Activated naive CD4-positive, alpha-beta T cell treated with anti-CD3 and anti-CD28 coated beads for 36 hours (primary cell): ENCODE measurements at regions of chr1 and their contacts with region 1.

Region 1: DNA sequence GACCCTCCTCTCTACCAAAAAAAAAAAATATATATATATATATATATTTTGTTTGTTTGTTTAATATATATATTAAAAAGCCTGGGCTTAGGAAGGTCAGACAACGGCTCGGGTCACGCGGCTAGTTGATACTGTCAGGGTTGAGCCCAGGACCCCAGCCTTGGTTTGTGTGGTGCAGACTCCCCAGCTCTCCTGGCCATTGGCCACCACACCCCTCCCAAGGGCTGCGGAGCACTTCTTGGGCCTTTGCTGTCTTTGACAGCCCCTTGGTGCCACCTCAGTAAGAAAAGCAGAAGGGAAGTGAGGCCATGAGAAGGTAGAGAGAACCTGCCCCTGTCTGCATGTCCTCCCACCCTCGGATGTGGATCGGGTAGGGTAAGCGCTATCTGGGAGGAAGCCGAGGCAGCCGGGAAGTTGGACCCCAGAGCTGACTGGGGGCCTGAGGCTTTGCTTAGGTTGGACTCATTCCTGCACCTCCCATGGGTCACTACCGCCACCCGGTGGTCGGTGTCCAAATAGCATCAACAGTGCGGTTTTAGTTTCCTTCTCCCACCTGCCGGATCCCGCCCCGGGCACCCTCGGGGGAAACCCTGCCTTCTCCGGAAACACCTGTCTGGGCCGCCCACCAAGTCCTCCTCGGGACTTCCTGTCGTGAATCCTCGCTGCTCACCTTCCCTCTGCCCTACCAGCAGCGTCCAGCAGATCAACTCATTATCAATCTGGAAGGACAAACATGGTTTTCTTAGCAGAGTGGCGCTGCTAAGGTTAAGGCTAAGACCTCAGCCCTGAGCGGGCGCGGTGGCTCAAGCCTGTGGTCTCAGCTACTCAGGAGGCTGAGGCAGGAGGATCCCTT is 29.8 kb upstream of the GNPAT start:
- DNase-seq: peak; percentile 98
- H3K4me3 Mint-ChIP-seq: peak overlapping the region; percentile 77
- H3K27ac Mint-ChIP-seq: no peak overlapping the region
- H3K4me1 Mint-ChIP-seq: peaks cover 7% of the 10 kb centered on the region
- H3K27me3 Mint-ChIP-seq: no peaks in the 10 kb centered on the region

Region 2: GRCh38 chr1:230797942-230798418 is 413.3 kb before region 1 on chr1:
- CTCF ChIA-PET with region 1: interaction called, 4 read pairs
- intact Hi-C with region 1: loop called (anchors 1 kb)
- DNase-seq: peak; percentile 23
- H3K4me3 Mint-ChIP-seq: no peak overlapping the region
- H3K27ac Mint-ChIP-seq: no peak overlapping the region
- H3K4me1 Mint-ChIP-seq: no peaks in the 10 kb centered on the region
- H3K27me3 Mint-ChIP-seq: peaks cover 12% of the 10 kb centered on the region

Region 3: DNA sequence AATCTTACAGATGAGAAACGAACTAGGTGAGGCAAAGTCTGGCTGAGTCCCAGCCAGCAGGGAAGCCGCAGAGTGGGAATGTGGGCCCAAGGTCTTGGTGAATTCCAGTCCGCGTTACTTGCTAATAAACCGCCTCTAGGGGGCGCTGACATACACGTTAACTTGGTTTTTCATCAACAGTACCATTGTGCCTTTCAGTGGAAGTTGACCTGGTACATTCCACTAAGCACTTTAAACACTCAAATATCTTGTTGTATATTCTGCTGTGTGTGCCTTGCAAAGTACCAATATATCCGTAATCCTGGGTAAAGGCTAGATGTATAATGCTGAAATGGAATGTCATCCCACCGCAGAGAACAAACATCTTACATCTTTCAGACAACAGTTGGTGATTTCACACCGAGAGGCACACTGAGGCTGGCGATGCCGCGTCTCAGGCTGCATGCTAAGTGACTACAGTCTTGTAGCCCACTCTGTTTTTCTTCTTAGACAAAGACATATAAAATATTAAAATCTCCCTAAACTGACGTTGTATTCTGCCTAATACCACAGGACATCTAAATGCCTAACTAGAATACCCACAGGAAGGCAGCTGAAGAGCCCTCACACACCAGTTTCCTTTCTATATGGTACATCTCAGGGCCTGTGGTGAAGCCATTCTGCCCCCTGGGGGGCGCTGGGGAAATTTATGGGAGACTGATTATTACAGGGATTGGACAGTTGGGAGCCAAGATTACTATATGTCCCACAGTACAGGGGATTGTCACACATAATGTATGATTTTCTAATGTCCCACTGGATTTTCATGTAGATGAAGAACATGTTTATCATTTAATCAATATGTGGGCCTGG is 293.7 kb before region 1 on chr1:
- CTCF ChIA-PET with region 1: interaction called, 3 read pairs
- intact Hi-C with region 1: loop called (anchors 1 kb)
- DNase-seq: peak; percentile 86
- H3K4me3 Mint-ChIP-seq: no peak overlapping the region
- H3K27ac Mint-ChIP-seq: no peak overlapping the region
- H3K4me1 Mint-ChIP-seq: peaks cover 5% of the 10 kb centered on the region
- H3K27me3 Mint-ChIP-seq: no peaks in the 10 kb centered on the region

Region 4: DNA sequence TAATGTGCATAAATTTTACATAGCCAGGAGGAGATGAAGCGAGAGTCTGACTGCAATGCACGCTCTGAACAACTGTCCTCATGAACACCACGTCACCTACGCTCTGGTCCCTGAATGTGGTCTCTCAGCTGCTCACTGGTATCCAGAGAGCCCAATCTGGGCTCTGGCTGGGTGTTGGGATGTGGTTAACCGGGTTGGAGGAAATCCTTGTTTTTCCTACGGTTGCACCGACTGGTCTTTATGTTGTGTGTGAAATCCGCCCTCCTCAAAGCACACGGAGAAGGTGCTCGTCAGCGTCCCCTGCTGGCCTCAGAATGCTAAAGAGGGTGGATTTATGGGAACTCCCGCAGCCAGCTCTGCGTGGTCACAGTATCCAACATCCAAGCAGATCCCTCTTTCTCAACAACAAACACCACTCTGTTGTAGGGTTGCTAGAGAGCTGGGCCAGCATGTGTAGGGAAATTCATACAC is 119.4 kb before region 1 on chr1:
- CTCF ChIA-PET with region 1: interaction called, 6 read pairs
- intact Hi-C with region 1: loop called (anchors 5 kb)
- DNase-seq: peak; percentile 56
- H3K4me3 Mint-ChIP-seq: no peak overlapping the region
- H3K27ac Mint-ChIP-seq: no peak overlapping the region
- H3K4me1 Mint-ChIP-seq: no peaks in the 10 kb centered on the region
- H3K27me3 Mint-ChIP-seq: peaks cover 18% of the 10 kb centered on the region

Region 5: DNA sequence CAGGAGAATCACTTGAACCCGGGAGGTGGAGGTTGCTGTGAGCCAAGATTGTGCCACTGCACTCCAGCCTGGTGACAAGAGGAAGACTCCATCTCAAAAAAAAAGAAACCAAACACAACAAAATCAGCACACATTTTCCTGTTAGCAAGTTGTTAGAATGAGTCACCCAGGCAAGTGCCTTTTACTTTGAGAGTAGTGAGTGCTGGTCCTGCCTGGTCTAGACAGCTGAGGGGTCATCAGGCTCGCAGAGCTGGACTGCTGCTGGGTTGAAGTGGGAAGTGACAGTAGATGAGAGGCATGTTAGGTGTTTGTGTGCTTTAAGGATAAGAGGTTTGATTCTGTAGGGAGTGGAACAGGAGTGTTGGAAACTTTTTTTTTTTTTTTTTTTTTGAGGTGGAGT is 61.6 kb after region 1 on chr1:
- CTCF ChIA-PET with region 1: no interaction called
- intact Hi-C with region 1: no loop called
- DNase-seq: peak; percentile 18
- H3K4me3 Mint-ChIP-seq: no peak overlapping the region
- H3K27ac Mint-ChIP-seq: peak overlapping the region; percentile 98
- H3K4me1 Mint-ChIP-seq: peaks cover 22% of the 10 kb centered on the region
- H3K27me3 Mint-ChIP-seq: no peaks in the 10 kb centered on the region

Region 6: GRCh38 chr1:231284441-231284840 is 73.2 kb after region 1 on chr1:
- CTCF ChIA-PET with region 1: no interaction called
- intact Hi-C with region 1: no loop called
- DNase-seq: no peak
- H3K4me3 Mint-ChIP-seq: no peak overlapping the region
- H3K27ac Mint-ChIP-seq: no peak overlapping the region
- H3K4me1 Mint-ChIP-seq: no peaks in the 10 kb centered on the region
- H3K27me3 Mint-ChIP-seq: no peaks in the 10 kb centered on the region

Region 7: GRCh38 chr1:231603598-231604275 is 392.5 kb after region 1 on chr1:
- CTCF ChIA-PET with region 1: no interaction called
- intact Hi-C with region 1: loop called (anchors 1 kb)
- DNase-seq: peak; percentile 42
- H3K4me3 Mint-ChIP-seq: peak overlapping the region; percentile 85
- H3K27ac Mint-ChIP-seq: peak overlapping the region; percentile 74
- H3K4me1 Mint-ChIP-seq: peaks cover 8% of the 10 kb centered on the region
- H3K27me3 Mint-ChIP-seq: no peaks in the 10 kb centered on the region